Naive thymus-derived CD4-positive, alpha-beta T cell (primary cell): ENCODE measurements at regions of chr7 and their contacts with region 1.

Region 1: DNA sequence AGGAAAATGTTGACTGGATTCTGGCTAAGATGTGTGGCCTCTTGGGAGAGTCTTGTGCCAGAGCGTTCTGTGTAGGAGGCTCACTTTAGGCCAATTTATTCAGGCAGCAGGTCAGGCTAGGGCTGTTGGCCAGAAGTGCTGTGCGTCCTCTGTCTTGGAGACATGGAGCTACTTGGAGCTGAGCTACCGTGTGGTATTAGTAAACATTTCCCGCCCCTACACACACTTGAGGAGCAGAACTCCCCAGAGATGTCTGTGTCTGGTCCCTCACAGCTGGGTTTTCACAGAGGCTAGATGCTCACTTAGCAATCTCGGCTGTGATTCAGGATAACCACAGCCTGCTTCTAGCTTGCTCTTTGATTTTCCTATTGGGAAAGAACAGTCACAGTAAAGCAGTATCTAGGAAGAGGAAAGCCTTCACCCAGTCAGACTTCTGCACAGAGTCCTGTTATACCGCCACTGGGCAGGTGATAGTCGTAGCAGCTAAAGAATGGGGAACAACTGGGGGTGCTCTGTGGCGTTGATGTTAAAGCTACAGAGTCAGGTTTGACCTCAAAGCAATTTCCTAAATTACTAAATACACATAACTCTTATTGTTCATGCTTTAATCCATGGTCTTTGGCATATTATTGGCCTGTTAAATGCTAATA is 86.7 kb downstream of the MDFIC start:
- DNase-seq: peak in 1 of 9 donors; percentile 23
- ATAC-seq: peak; percentile 58
- H3K4me3 ChIP-seq: peak overlapping the region; percentile 25
- H3K4me3 Mint-ChIP-seq: peak overlapping the region; percentile 53 to 85 (median 76)
- H3K27ac ChIP-seq: peak overlapping the region; percentile 54
- H3K27ac Mint-ChIP-seq: peak overlapping the region; percentile 56 to 94 (median 88)
- H3K4me1 ChIP-seq: peaks cover 53 to 75% of the 10 kb centered on the region in 2 donors
- H3K4me1 Mint-ChIP-seq: peaks cover 48 to 94% (median 86%) of the 10 kb centered on the region in 7 donors
- H3K27me3 ChIP-seq: no peaks in the 10 kb centered on the region
- H3K27me3 Mint-ChIP-seq: no peaks in the 10 kb centered on the region

Region 2: DNA sequence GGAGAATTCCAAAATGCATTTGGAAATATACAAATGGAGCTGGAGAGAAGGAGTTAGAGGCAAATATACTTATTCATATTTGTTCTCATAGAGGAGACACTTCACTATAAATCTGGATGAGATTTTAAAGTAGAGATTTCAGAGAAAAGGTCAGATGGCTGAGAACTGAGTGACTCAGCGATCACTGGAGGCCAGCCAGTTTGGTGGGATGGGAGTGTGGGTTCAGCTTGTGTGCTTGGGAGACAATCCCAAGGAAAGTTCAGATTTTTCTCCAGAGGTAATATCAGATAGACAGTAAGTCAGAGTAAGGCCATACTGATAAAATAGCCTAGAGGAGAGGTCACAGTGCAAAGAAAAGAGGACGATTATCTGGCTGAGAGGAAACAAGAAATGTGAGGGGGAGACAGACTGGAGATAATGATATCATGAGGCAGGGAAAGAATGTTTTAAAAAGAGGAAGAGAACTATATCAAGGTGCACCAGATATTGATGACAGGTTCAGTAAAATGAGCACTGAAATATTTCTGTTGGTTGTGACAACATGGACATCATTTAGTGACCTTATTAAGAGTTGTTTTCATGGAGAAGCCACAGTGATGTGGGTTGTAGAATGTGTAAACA is 19.7 kb before region 1 on chr7:
- CTCF ChIA-PET with region 1: no interaction called
- POLR2A ChIA-PET with region 1: no interaction called
- intact Hi-C with region 1: loop called in 1 of 2 experiments (anchors 2 kb)
- DNase-seq: no peak
- ATAC-seq: no peak
- H3K4me3 ChIP-seq: no peak overlapping the region
- H3K4me3 Mint-ChIP-seq: no peak overlapping the region
- H3K27ac ChIP-seq: no peak overlapping the region
- H3K27ac Mint-ChIP-seq: no peak overlapping the region
- H3K4me1 ChIP-seq: peaks cover 0 to 4% of the 10 kb centered on the region in 2 donors
- H3K4me1 Mint-ChIP-seq: peaks cover 10 to 49% (median 33%) of the 10 kb centered on the region in 7 donors
- H3K27me3 ChIP-seq: no peaks in the 10 kb centered on the region
- H3K27me3 Mint-ChIP-seq: no peaks in the 10 kb centered on the region

Region 3: GRCh38 chr7:115217373-115217772 is 208.8 kb after region 1 on chr7:
- CTCF ChIA-PET with region 1: no interaction called
- POLR2A ChIA-PET with region 1: interaction called, 3 read pairs
- intact Hi-C with region 1: loop called in 1 of 2 experiments (anchors 2 kb)
- DNase-seq: peak in 1 of 9 donors; percentile 21
- ATAC-seq: peak; percentile 41
- H3K4me3 ChIP-seq: no peak overlapping the region
- H3K4me3 Mint-ChIP-seq: no peak overlapping the region
- H3K27ac ChIP-seq: no peak overlapping the region
- H3K27ac Mint-ChIP-seq: no peak overlapping the region
- H3K4me1 ChIP-seq: peaks cover 0 to 11% of the 10 kb centered on the region in 2 donors
- H3K4me1 Mint-ChIP-seq: peaks cover 0 to 11% (median 5%) of the 10 kb centered on the region in 7 donors
- H3K27me3 ChIP-seq: no peaks in the 10 kb centered on the region
- H3K27me3 Mint-ChIP-seq: peaks cover 0 to 10% (median 0%) of the 10 kb centered on the region in 5 donors